CD8-positive, alpha-beta memory T cell (primary cell): ENCODE measurements at regions of chr15 and their contacts with region 1.

Region 1: DNA sequence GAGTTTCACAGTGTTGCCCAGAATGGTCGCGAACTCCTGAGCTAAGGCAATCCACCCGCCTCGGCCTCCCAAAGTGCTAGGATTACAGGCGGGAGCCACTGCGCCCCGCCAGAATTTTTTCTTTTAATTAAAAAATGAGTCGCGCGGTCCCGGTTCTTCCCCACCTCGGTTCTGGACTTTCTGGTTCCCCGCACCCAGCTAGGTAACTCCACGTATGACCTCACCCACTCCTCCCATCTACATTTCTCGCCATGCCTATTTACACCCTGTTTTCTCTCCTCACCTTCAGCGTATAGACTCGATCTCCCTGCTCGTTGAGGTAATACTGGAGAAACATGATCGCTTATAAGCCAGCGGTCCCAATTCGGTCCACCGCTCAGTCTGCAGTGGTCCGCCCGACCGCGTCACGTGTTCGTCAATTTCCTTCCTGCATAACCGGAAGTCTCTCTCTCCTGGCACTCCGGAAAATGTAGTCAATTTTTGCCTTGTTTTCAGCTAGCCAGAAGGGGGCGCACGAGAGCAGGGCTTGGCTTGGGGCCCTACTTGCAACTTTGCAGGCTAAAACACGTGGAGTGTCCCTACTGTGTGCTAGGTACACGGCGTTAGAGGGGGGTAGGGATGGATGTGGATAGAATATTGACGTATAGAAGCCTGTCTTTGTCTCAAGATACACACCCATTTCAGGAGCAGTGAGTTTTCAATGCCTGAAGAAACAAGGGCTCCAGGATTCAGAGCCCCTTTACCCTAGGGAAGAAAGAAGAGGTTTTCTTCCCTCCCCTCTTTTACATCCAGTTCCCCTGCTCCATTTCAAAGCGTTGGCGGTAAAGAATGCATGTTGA is at the starts of genes NOP10 and NUTM1:
- DNase-seq: peak; percentile 90 to 94 (median 93)
- H3K4me3 ChIP-seq: peak within 1 kb of the TSS; percentile 82
- H3K4me3 Mint-ChIP-seq: peak within 1 kb of the TSS in 1 of 7 donors; percentile 75
- H3K27ac ChIP-seq: peak within 1 kb of the TSS; percentile 79
- H3K27ac Mint-ChIP-seq: peak within 1 kb of the TSS in 6 of 8 donors; percentile 83 to 92 (median 88)
- H3K4me1 ChIP-seq: peaks cover 19% of the 10 kb centered on the region
- H3K4me1 Mint-ChIP-seq: peaks cover 21 to 26% (median 24%) of the 10 kb centered on the region in 3 donors
- H3K27me3 ChIP-seq: no peaks in the 10 kb centered on the region
- H3K27me3 Mint-ChIP-seq: no peaks in the 10 kb centered on the region
- total RNA-seq, gene NOP10: 284 to 292 TPM
- total RNA-seq, gene NUTM1: not detected

Region 2: DNA sequence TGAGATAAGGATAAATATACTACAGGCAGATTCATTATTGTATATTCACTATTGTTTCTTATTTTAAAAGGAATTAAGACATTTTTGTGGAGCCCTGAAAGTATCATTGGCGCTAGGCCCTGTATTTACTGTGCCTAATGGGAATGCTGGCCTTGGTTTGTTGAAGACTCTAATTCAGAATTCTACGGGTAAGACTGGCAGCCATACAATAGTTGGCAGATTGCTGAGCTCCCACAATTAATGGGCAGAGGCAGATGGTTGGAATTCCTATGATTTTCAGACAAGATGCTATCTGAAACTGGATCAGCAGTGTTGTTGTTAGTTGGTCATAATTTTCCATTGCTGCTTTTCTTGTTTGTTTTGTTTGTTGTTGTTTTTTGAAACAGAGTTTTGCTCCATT is 226.3 kb before region 1 on chr15:
- CTCF ChIA-PET with region 1: no interaction called
- POLR2A ChIA-PET with region 1: no interaction called
- DNase-seq: no peak
- H3K4me3 ChIP-seq: no peak overlapping the region
- H3K4me3 Mint-ChIP-seq: no peak overlapping the region
- H3K27ac ChIP-seq: no peak overlapping the region
- H3K27ac Mint-ChIP-seq: no peak overlapping the region
- H3K4me1 ChIP-seq: no peaks in the 10 kb centered on the region
- H3K4me1 Mint-ChIP-seq: no peaks in the 10 kb centered on the region
- H3K27me3 ChIP-seq: no peaks in the 10 kb centered on the region
- H3K27me3 Mint-ChIP-seq: peaks cover 21 to 46% of the 10 kb centered on the region in 2 donors

Region 3: DNA sequence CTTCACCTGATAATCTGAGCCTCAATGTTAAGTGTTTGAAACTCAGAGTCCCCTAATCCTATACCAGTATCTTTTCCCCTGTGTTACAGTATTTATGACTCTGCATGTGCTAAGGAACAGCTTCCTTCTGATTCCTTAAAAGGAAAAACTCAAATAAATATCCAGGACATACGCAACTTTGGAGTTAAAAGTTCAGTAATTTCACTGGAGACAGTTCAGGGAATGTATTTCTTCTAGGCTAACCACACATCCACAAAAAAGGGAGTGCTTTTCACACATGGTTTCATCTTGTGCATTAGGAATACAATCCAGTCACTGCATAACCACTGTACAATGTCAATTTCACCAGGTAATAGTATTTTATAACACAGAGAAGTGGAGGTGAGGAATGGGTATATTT is 210.1 kb before region 1 on chr15:
- CTCF ChIA-PET with region 1: no interaction called
- POLR2A ChIA-PET with region 1: no interaction called
- DNase-seq: no peak
- H3K4me3 ChIP-seq: no peak overlapping the region
- H3K4me3 Mint-ChIP-seq: no peak overlapping the region
- H3K27ac ChIP-seq: no peak overlapping the region
- H3K27ac Mint-ChIP-seq: no peak overlapping the region
- H3K4me1 ChIP-seq: no peaks in the 10 kb centered on the region
- H3K4me1 Mint-ChIP-seq: no peaks in the 10 kb centered on the region
- H3K27me3 ChIP-seq: no peaks in the 10 kb centered on the region
- H3K27me3 Mint-ChIP-seq: no peaks in the 10 kb centered on the region

Region 4: GRCh38 chr15:34223904-34224596 is 118.9 kb before region 1 on chr15:
- CTCF ChIA-PET with region 1: no interaction called
- POLR2A ChIA-PET with region 1: no interaction called
- DNase-seq: no peak
- H3K4me3 ChIP-seq: peak overlapping the region; percentile 97
- H3K4me3 Mint-ChIP-seq: peak overlapping the region; percentile 91 to 99 (median 95)
- H3K27ac ChIP-seq: peak overlapping the region; percentile 90
- H3K27ac Mint-ChIP-seq: peak overlapping the region; percentile 81 to 99 (median 98)
- H3K4me1 ChIP-seq: peaks cover 18% of the 10 kb centered on the region
- H3K4me1 Mint-ChIP-seq: peaks cover 25 to 39% (median 29%) of the 10 kb centered on the region in 3 donors
- H3K27me3 ChIP-seq: no peaks in the 10 kb centered on the region
- H3K27me3 Mint-ChIP-seq: peaks cover 4 to 9% of the 10 kb centered on the region in 2 donors

Region 5: GRCh38 chr15:34304613-34305012 is 38.3 kb before region 1 on chr15:
- CTCF ChIA-PET with region 1: no interaction called
- POLR2A ChIA-PET with region 1: no interaction called
- DNase-seq: no peak
- H3K4me3 ChIP-seq: no peak overlapping the region
- H3K4me3 Mint-ChIP-seq: no peak overlapping the region
- H3K27ac ChIP-seq: no peak overlapping the region
- H3K27ac Mint-ChIP-seq: peak overlapping the region in 1 of 8 donors; percentile 2
- H3K4me1 ChIP-seq: no peaks in the 10 kb centered on the region
- H3K4me1 Mint-ChIP-seq: peaks cover 15 to 39% (median 26%) of the 10 kb centered on the region in 3 donors
- H3K27me3 ChIP-seq: no peaks in the 10 kb centered on the region
- H3K27me3 Mint-ChIP-seq: no peaks in the 10 kb centered on the region

Region 6: GRCh38 chr15:34358367-34358766 is 15.4 kb after region 1 on chr15:
- CTCF ChIA-PET with region 1: interaction called, 15 read pairs
- POLR2A ChIA-PET with region 1: no interaction called
- DNase-seq: no peak
- H3K4me3 ChIP-seq: no peak overlapping the region
- H3K4me3 Mint-ChIP-seq: no peak overlapping the region
- H3K27ac ChIP-seq: no peak overlapping the region
- H3K27ac Mint-ChIP-seq: peak overlapping the region in 2 of 8 donors; percentile 71 to 82
- H3K4me1 ChIP-seq: no peaks in the 10 kb centered on the region
- H3K4me1 Mint-ChIP-seq: peaks cover 0 to 5% (median 5%) of the 10 kb centered on the region in 3 donors
- H3K27me3 ChIP-seq: no peaks in the 10 kb centered on the region
- H3K27me3 Mint-ChIP-seq: no peaks in the 10 kb centered on the region